Esophagus muscularis mucosa (tissue), 4 donors: ENCODE measurements at regions of chr9 and their contacts with region 1.

Region 1: GRCh38 chr9:21317956-21318923 is 13.1 kb upstream of the IFNA5 start:
- DNase-seq: no peak
- H3K4me3 ChIP-seq: no peak overlapping the region
- H3K27ac ChIP-seq: no peak overlapping the region
- H3K4me1 ChIP-seq: peaks cover 7 to 26% (median 21%) of the 10 kb centered on the region in 4 donors
- H3K27me3 ChIP-seq: no peaks in the 10 kb centered on the region
- CTCF ChIP-seq: peak; percentile 61 to 68 (median 61)
- EP300 ChIP-seq: no peak
- POLR2A ChIP-seq: no peak

Region 2: GRCh38 chr9:21367957-21368356 is 49.7 kb after region 1 on chr9 and contains the start of gene IFNA13:
- intact Hi-C with region 1: no loop called
- DNase-seq: no peak
- H3K4me3 ChIP-seq: no peak within 1 kb of the TSS
- H3K27ac ChIP-seq: no peak within 1 kb of the TSS
- H3K4me1 ChIP-seq: no peaks in the 10 kb centered on the region
- H3K27me3 ChIP-seq: peaks cover 0 to 9% (median 0%) of the 10 kb centered on the region in 4 donors
- CTCF ChIP-seq: no peak
- EP300 ChIP-seq: no peak
- POLR2A ChIP-seq: no peak
- total RNA-seq, gene IFNA13: not detected

Region 3: GRCh38 chr9:21395778-21396717 is 77.8 kb after region 1 on chr9:
- intact Hi-C with region 1: loop called (anchors 2 kb)
- DNase-seq: no peak
- H3K4me3 ChIP-seq: peak overlapping the region; percentile 54 to 65 (median 56)
- H3K27ac ChIP-seq: no peak overlapping the region
- H3K4me1 ChIP-seq: peaks cover 0 to 8% (median 6%) of the 10 kb centered on the region in 4 donors
- H3K27me3 ChIP-seq: peaks cover 0 to 56% (median 3%) of the 10 kb centered on the region in 4 donors
- CTCF ChIP-seq: peak; percentile 52 to 83 (median 70)
- EP300 ChIP-seq: no peak
- POLR2A ChIP-seq: no peak

Region 4: DNA sequence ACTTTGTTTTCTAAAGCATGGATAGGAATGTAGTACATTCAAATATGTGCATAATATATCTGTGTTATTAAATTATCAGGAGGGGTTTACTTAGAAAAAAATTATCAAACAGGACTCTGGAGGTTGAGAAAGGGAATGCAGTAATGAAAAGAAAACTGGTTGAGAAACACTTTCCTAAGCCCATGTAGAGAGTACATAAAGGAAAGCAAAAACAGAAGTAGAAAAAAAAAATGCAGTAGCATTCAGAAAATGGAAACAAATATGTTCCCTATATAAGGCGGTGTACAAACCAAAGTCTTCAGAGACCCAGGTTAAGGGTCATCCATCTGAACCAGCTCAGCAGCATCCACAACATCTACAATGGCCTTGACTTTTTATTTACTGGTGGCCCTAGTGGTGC is 90.6 kb after region 1 on chr9 and contains the start of gene IFNA8:
- intact Hi-C with region 1: no loop called
- DNase-seq: no peak
- H3K4me3 ChIP-seq: no peak within 1 kb of the TSS
- H3K27ac ChIP-seq: no peak within 1 kb of the TSS
- H3K4me1 ChIP-seq: no peaks in the 10 kb centered on the region
- H3K27me3 ChIP-seq: no peaks in the 10 kb centered on the region
- CTCF ChIP-seq: no peak
- EP300 ChIP-seq: no peak
- POLR2A ChIP-seq: no peak
- total RNA-seq, gene IFNA8: not detected

Region 5: GRCh38 chr9:21454149-21454548 is 135.9 kb after region 1 on chr9:
- intact Hi-C with region 1: loop called (anchors 5 kb)
- DNase-seq: no peak
- H3K4me3 ChIP-seq: no peak overlapping the region
- H3K27ac ChIP-seq: no peak overlapping the region
- H3K4me1 ChIP-seq: no peaks in the 10 kb centered on the region
- H3K27me3 ChIP-seq: no peaks in the 10 kb centered on the region
- CTCF ChIP-seq: no peak
- EP300 ChIP-seq: no peak
- POLR2A ChIP-seq: no peak

Region 6: GRCh38 chr9:21638104-21638503 is 319.9 kb after region 1 on chr9:
- intact Hi-C with region 1: no loop called
- DNase-seq: no peak
- H3K4me3 ChIP-seq: no peak overlapping the region
- H3K27ac ChIP-seq: no peak overlapping the region
- H3K4me1 ChIP-seq: no peaks in the 10 kb centered on the region
- H3K27me3 ChIP-seq: no peaks in the 10 kb centered on the region
- CTCF ChIP-seq: no peak
- EP300 ChIP-seq: no peak
- POLR2A ChIP-seq: no peak

Region 7: DNA sequence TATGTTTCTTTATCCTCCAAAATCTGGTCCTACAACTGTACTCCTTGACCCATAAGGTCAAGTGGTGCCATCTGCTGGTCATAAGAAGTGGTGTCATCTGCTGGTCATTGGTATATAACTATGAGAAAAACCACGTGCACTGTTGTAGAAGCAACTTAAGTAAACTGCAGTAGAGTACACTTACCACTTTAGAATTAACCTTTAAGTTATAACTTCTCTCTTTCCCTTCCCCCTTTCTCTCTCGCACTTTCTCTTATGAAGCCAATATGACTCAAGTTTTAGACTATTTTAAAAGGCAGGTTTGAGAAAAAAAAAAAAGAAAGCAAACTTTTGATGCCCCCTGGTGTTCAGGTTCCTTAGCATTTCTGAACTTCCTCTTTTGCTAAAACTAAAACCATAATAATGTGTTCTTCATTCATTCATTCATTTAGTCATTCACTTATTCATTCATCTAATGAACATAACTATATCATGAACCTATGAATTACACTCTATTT is 471.3 kb after region 1 on chr9:
- intact Hi-C with region 1: loop called (anchors 5 kb)
- DNase-seq: no peak
- H3K4me3 ChIP-seq: peak overlapping the region in 3 of 4 donors; percentile 14 to 39 (median 21)
- H3K27ac ChIP-seq: no peak overlapping the region
- H3K4me1 ChIP-seq: no peaks in the 10 kb centered on the region
- H3K27me3 ChIP-seq: peaks cover 0 to 20% (median 0%) of the 10 kb centered on the region in 4 donors
- CTCF ChIP-seq: peak; percentile 72 to 86 (median 83)
- EP300 ChIP-seq: no peak
- POLR2A ChIP-seq: no peak